ENCODE measurements at regions of chr16 and their contacts with region 1.

Region 1: DNA sequence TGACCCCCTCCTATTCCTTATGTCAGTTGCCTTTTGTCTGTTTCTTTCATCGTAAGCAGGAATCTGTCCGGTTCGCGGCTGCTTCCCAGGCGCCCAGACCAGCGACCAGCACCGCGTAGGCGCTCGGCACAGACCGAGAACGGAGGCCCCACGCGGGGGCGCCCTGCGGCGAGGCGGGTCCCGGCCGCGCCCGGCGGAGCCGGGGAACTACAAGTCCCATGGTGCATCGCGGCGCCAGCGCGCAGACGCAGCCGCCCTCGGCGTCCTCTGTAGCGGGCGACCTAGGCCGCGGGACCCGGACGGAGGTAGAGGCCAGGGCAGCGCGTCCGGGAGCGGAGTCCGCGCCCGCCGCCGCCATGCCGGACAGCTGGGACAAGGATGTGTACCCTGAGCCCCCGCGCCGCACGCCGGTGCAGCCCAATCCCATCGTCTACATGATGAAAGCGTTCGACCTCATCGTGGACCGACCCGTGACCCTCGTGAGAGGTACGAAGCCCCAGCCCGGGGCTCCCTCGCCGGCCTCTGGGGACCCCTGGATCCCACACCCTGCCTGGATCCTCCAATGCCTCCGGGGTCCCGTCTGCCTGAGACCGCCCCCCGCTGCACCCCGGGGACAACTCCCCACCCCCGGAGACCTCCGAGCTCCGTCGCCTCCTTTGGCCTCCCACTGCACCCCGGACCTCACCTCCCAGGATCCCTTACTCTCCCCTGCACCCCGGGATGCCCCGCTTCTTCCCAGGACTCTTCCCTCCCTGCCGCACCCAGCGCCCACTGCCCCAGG is at the start of gene NDUFB10:
- DNase-seq: peak; percentile 80 to 98 (median 89)
- ATAC-seq: peak; percentile 97
- H3K4me3 ChIP-seq: peak within 1 kb of the TSS; percentile 86
- H3K4me3 Mint-ChIP-seq: peak within 1 kb of the TSS; percentile 85 to 97 (median 91)
- H3K27ac ChIP-seq: peak within 1 kb of the TSS; percentile 92
- H3K27ac Mint-ChIP-seq: peak within 1 kb of the TSS; percentile 82 to 95 (median 90)
- H3K4me1 ChIP-seq: peaks cover 25 to 38% of the 10 kb centered on the region in 2 donors
- H3K4me1 Mint-ChIP-seq: peaks cover 21 to 41% (median 27%) of the 10 kb centered on the region in 7 donors
- H3K27me3 ChIP-seq: no peaks in the 10 kb centered on the region
- H3K27me3 Mint-ChIP-seq: peaks cover 0 to 2% (median 0%) of the 10 kb centered on the region in 5 donors
- total RNA-seq, gene NDUFB10: 40.0 to 114 (median 71.1) TPM

Region 2: DNA sequence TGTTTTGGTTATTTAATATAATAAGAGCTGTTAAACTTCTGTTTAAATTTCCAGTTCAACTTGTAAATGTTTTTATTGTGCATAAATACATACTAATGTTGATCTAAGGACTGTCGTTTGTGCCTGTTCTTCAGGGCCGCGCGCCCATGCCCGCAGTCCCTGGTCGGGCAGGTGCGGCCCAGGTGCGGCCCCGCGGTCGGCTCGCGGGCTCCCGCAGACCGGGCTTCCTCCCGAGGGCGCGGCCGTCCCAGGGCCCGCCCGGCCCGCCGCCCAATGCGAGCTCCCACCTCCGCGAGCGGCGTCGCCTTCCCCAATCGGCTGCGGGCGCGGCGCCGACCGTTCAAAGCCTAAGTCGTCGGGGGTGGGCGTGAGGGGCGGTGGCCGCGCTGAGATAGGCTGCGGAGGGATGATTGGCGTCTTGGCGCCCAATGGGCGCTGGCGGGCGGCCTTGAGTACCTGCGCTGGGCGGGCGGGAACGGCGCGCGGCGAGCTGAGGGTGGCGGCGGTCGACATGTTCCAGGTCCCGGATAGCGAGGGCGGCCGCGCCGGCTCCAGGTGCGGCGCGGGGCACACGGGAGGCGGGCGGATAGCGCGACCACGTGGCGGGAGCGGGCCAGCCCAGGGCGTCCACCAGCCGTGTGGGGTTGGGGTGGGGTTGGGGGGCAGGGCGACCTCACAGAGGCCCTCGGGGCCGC is 281.5 kb before region 1 on chr16 and contains the start of gene JPT2:
- CTCF ChIA-PET with region 1: no interaction called
- POLR2A ChIA-PET with region 1: no interaction called
- intact Hi-C with region 1: no loop called
- DNase-seq: peak; percentile 89 to 97 (median 94)
- ATAC-seq: peak; percentile 98
- H3K4me3 ChIP-seq: peak within 1 kb of the TSS; percentile 59
- H3K4me3 Mint-ChIP-seq: peak within 1 kb of the TSS; percentile 81 to 90 (median 88)
- H3K27ac ChIP-seq: peak within 1 kb of the TSS; percentile 78
- H3K27ac Mint-ChIP-seq: peak within 1 kb of the TSS; percentile 64 to 91 (median 78)
- H3K4me1 ChIP-seq: no peaks in the 10 kb centered on the region
- H3K4me1 Mint-ChIP-seq: peaks cover 24 to 42% (median 36%) of the 10 kb centered on the region in 7 donors
- H3K27me3 ChIP-seq: no peaks in the 10 kb centered on the region
- H3K27me3 Mint-ChIP-seq: no peaks in the 10 kb centered on the region
- total RNA-seq, gene JPT2: 12.6 to 67.2 (median 36.4) TPM

Region 3: GRCh38 chr16:1913327-1914083 is 46.0 kb before region 1 on chr16:
- CTCF ChIA-PET with region 1: no interaction called
- POLR2A ChIA-PET with region 1: no interaction called
- intact Hi-C with region 1: no loop called
- DNase-seq: no peak
- ATAC-seq: peak; percentile 18
- H3K4me3 ChIP-seq: no peak overlapping the region
- H3K4me3 Mint-ChIP-seq: no peak overlapping the region
- H3K27ac ChIP-seq: no peak overlapping the region
- H3K27ac Mint-ChIP-seq: no peak overlapping the region
- H3K4me1 ChIP-seq: no peaks in the 10 kb centered on the region
- H3K4me1 Mint-ChIP-seq: peaks cover 0 to 5% (median 0%) of the 10 kb centered on the region in 7 donors
- H3K27me3 ChIP-seq: no peaks in the 10 kb centered on the region
- H3K27me3 Mint-ChIP-seq: peaks cover 15 to 34% (median 28%) of the 10 kb centered on the region in 5 donors

Region 4: GRCh38 chr16:1971796-1972489 is 12.5 kb after region 1 on chr16 and contains the start of gene TBL3:
- CTCF ChIA-PET with region 1: interaction called, 5 read pairs
- POLR2A ChIA-PET with region 1: interaction called, 61 read pairs
- intact Hi-C with region 1: loop called (anchors 1 kb)
- DNase-seq: peak; percentile 95 to 99 (median 98)
- ATAC-seq: peak; percentile 97
- H3K4me3 ChIP-seq: peak within 1 kb of the TSS; percentile 81
- H3K4me3 Mint-ChIP-seq: peak within 1 kb of the TSS; percentile 87 to 98 (median 95)
- H3K27ac ChIP-seq: peak within 1 kb of the TSS; percentile 89
- H3K27ac Mint-ChIP-seq: peak within 1 kb of the TSS; percentile 93 to 100 (median 98)
- H3K4me1 ChIP-seq: peaks cover 7 to 18% of the 10 kb centered on the region in 2 donors
- H3K4me1 Mint-ChIP-seq: peaks cover 16 to 27% (median 20%) of the 10 kb centered on the region in 7 donors
- H3K27me3 ChIP-seq: no peaks in the 10 kb centered on the region
- H3K27me3 Mint-ChIP-seq: peaks cover 0 to 4% (median 0%) of the 10 kb centered on the region in 5 donors
- total RNA-seq, gene TBL3: 17.2 to 45.2 (median 27.6) TPM

Region 5: GRCh38 chr16:1983544-1984346 is 24.3 kb after region 1 on chr16 and contains the start of gene GFER:
- CTCF ChIA-PET with region 1: no interaction called
- POLR2A ChIA-PET with region 1: interaction called, 61 read pairs
- intact Hi-C with region 1: loop called in 1 of 2 experiments (anchors 1 kb)
- DNase-seq: peak in 7 of 9 donors; percentile 24 to 88 (median 48)
- ATAC-seq: peak; percentile 89
- H3K4me3 ChIP-seq: peak within 1 kb of the TSS; percentile 71
- H3K4me3 Mint-ChIP-seq: peak within 1 kb of the TSS; percentile 66 to 90 (median 84)
- H3K27ac ChIP-seq: peak within 1 kb of the TSS; percentile 69
- H3K27ac Mint-ChIP-seq: peak within 1 kb of the TSS; percentile 4 to 89 (median 71)
- H3K4me1 ChIP-seq: peaks cover 0 to 13% of the 10 kb centered on the region in 2 donors
- H3K4me1 Mint-ChIP-seq: peaks cover 2 to 27% (median 17%) of the 10 kb centered on the region in 7 donors
- H3K27me3 ChIP-seq: peaks cover 0 to 3% of the 10 kb centered on the region in 2 donors
- H3K27me3 Mint-ChIP-seq: peaks cover 11 to 37% (median 14%) of the 10 kb centered on the region in 5 donors
- total RNA-seq, gene GFER: 14.0 to 28.2 (median 18.1) TPM

Region 6: DNA sequence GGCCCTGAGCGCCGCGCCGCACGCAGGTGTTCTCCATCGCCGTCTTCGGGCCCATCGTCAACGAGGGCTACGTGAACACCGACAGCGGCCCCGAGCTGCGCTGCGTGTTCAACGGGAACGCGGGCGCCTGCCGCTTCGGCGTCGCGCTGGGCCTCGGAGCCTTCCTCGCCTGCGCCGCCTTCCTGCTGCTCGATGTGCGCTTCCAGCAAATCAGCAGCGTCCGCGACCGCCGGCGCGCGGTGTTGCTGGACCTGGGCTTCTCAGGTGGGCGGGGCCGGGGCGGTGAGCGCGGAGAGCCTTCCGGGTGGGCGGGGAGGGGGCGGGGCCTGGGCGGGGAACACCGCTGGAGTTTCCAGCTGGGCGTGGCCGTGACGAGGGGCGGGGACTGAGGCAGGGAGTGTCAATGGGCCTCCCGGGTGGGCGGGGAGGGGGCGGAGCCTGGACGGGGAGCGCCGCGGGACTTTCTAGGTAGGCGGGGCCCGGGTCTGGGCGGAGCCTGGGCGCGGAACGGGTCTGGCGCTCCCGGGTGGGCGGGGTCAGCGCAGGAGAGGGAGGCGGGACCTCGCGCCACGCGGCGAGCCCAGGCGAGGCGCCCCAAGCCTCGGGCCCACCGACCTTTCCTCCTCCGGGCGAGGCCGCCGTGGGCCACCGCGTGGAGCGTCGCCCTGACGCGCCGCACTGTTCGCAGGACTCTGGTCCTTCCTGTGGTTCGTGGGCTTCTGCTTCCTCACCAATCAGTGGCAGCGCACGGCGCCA is 32.7 kb after region 1 on chr16:
- CTCF ChIA-PET with region 1: no interaction called
- POLR2A ChIA-PET with region 1: interaction called, 61 read pairs
- intact Hi-C with region 1: loop called (anchors 1 to 2 kb)
- DNase-seq: peak; percentile 85 to 98 (median 92)
- ATAC-seq: peak; percentile 95
- H3K4me3 ChIP-seq: peak overlapping the region; percentile 39
- H3K4me3 Mint-ChIP-seq: peak overlapping the region in 9 of 10 donors; percentile 45 to 82 (median 75)
- H3K27ac ChIP-seq: peak overlapping the region; percentile 54
- H3K27ac Mint-ChIP-seq: peak overlapping the region in 7 of 9 donors; percentile 22 to 82 (median 62)
- H3K4me1 ChIP-seq: peaks cover 15 to 16% of the 10 kb centered on the region in 2 donors
- H3K4me1 Mint-ChIP-seq: peaks cover 5 to 33% (median 22%) of the 10 kb centered on the region in 7 donors
- H3K27me3 ChIP-seq: peaks cover 0 to 3% of the 10 kb centered on the region in 2 donors
- H3K27me3 Mint-ChIP-seq: peaks cover 8 to 14% (median 10%) of the 10 kb centered on the region in 5 donors

Region 7: GRCh38 chr16:2009789-2010510 is 50.5 kb after region 1 on chr16 and contains the start of gene ZNF598:
- CTCF ChIA-PET with region 1: no interaction called
- POLR2A ChIA-PET with region 1: interaction called, 19 read pairs
- intact Hi-C with region 1: loop called (anchors 1 to 2 kb)
- DNase-seq: peak; percentile 64 to 87 (median 78)
- ATAC-seq: peak; percentile 97
- H3K4me3 ChIP-seq: peak within 1 kb of the TSS; percentile 77
- H3K4me3 Mint-ChIP-seq: peak within 1 kb of the TSS; percentile 87 to 94 (median 92)
- H3K27ac ChIP-seq: peak within 1 kb of the TSS; percentile 91
- H3K27ac Mint-ChIP-seq: peak within 1 kb of the TSS; percentile 85 to 99 (median 97)
- H3K4me1 ChIP-seq: peaks cover 26 to 29% of the 10 kb centered on the region in 2 donors
- H3K4me1 Mint-ChIP-seq: peaks cover 22 to 39% (median 32%) of the 10 kb centered on the region in 7 donors
- H3K27me3 ChIP-seq: no peaks in the 10 kb centered on the region
- H3K27me3 Mint-ChIP-seq: no peaks in the 10 kb centered on the region
- total RNA-seq, gene ZNF598: 44.3 to 63.2 (median 49.8) TPM

Region 8: GRCh38 chr16:2047330-2048115 is 88.1 kb after region 1 on chr16 and contains the starts of genes NTHL1 and TSC2:
- CTCF ChIA-PET with region 1: no interaction called
- POLR2A ChIA-PET with region 1: interaction called, 5 read pairs
- intact Hi-C with region 1: loop called in 1 of 2 experiments (anchors 1 kb)
- DNase-seq: peak; percentile 81 to 95 (median 87)
- ATAC-seq: peak; percentile 98
- H3K4me3 ChIP-seq: peak within 1 kb of the TSS; percentile 72
- H3K4me3 Mint-ChIP-seq: peak within 1 kb of the TSS; percentile 82 to 97 (median 93)
- H3K27ac ChIP-seq: peak within 1 kb of the TSS; percentile 82
- H3K27ac Mint-ChIP-seq: peak within 1 kb of the TSS in 8 of 9 donors; percentile 57 to 91 (median 82)
- H3K4me1 ChIP-seq: peaks cover 6 to 12% of the 10 kb centered on the region in 2 donors
- H3K4me1 Mint-ChIP-seq: peaks cover 16 to 23% (median 19%) of the 10 kb centered on the region in 7 donors
- H3K27me3 ChIP-seq: no peaks in the 10 kb centered on the region
- H3K27me3 Mint-ChIP-seq: no peaks in the 10 kb centered on the region
- total RNA-seq, gene NTHL1: 4.4 to 27.0 (median 7.5) TPM
- total RNA-seq, gene TSC2: 126 to 155 (median 147) TPM